GM10248 (cell line): ENCODE measurements at regions of chr4 and their contacts with region 1.

Region 1: GRCh38 chr4:73222466-73223257 is 35.9 kb downstream of the ANKRD17 start:
- DNase-seq: peak; percentile 58
- CTCF ChIP-seq: no peak

Region 2: GRCh38 chr4:73211968-73212367 is 10.7 kb before region 1 on chr4:
- CTCF ChIA-PET with region 1: interaction called, 13 read pairs
- POLR2A ChIA-PET with region 1: no interaction called
- DNase-seq: no peak
- CTCF ChIP-seq: no peak